HAP-1 (cell line): ENCODE measurements at regions of chr14 and their contacts with region 1.

Region 1: DNA sequence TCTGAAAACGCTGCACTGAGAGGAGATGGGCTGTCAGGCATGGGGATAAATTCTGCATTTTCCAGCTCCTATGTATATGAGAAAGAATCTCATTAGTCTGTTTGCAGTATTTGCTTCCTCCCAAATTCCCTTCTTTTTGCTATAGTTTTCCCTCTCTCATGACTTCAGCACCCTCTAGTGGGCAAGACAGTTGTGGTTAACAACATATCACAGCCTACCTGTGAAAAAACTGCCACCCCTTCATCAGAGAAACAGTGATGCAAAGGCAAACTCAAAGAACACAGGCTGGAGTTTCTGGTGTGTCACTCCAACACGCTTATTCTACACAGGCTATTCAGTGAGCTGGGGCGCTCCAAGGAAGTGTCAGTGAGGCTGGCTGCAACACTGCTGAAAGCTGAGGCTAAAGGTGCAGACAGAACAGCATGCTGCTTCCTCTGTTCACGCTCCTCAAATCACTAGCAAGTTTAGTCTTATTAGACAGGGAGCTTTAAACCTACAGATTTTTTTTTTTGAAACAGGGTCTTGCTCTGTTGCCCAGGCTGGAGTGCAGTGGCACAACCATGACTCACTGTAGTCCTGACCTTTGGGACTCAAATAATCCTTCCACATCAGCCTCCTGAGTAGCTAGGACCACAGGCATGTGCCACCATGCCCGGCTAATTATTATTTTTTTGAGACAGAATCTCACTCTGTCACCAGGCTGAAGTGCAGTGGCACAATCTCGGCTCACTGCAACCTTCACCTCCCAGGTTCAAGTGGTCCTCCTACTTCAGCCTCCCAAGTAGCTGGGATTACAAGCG is 19.3 kb downstream of the ZC2HC1C start:
- DNase-seq: peak; percentile 41 to 72
- H3K4me3 ChIP-seq: no peak overlapping the region
- H3K4me1 ChIP-seq: no peaks in the 10 kb centered on the region
- H3K27me3 ChIP-seq: no peaks in the 10 kb centered on the region

Region 2: GRCh38 chr14:74945823-74946682 is 142.7 kb before region 1 on chr14:
- in situ Hi-C with region 1: loop called (anchors 25 kb)
- DNase-seq: peak; percentile 64 to 91
- H3K4me3 ChIP-seq: no peak overlapping the region
- H3K4me1 ChIP-seq: no peaks in the 10 kb centered on the region
- H3K27me3 ChIP-seq: no peaks in the 10 kb centered on the region